AG04449 (cell line): ENCODE measurements at regions of chr1 and their contacts with region 1.

Region 1: DNA sequence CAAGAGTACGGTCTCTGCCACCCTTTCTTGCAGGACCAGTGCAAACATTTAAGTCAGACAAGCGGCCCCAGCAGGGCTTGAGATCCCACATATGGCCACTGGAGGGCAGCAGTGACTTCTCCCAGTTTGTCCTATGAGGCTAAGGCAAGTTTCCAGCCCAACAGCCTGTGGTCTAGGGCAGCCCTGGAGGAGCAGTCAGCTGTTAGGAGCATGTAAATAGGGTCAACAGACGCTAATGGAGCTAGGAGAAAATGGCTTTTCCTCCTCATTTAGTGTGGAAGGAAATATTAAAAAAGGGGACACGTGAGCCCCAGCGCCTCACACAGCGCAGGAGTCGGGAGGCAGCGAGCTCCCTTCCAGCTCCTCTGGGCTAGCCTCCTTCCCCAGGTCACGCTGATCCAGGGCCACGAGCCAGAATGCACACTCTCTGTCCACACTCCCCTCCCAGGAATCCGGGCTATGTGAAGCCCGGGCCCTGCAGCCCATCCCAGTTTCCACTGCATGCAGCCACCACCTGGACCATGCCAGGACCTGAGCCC is 95.6 kb downstream of the LAMC2 start:
- DNase-seq: no peak
- H3K4me3 ChIP-seq: no peak overlapping the region
- CTCF ChIP-seq: peak; percentile 93

Region 2: GRCh38 chr1:183058851-183059502 is 222.6 kb before region 1 on chr1:
- CTCF ChIA-PET with region 1: no interaction called
- POLR2A ChIA-PET with region 1: no interaction called
- DNase-seq: no peak
- H3K4me3 ChIP-seq: no peak overlapping the region
- CTCF ChIP-seq: no peak

Region 3: DNA sequence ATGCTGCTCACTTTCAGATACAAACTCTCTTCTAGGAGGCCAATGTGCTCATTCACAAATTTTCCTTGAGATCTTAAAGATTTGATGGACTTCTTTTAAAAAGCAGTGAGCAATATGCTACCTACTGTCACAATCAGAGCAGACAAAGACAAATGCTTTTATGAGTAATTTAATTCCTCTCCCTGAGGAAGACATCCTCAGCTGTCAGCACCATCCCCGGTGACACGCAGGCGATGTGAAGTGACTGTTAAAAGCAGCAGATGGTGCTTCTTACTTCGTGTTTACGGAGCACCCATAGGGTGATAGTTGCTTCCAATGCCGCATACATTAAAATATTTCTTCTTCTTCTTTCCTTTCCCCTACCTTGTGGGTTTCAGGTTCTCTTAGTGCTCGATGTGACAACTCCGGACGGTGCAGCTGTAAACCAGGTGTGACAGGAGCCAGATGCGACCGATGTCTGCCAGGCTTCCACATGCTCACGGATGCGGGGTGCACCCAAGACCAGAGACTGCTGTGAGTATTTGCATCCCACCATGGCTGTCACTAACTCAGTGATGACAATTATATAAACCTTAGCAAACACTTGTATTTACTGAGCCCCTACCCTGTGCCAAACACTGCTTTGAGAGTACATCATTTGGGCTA is 66.4 kb before region 1 on chr1:
- CTCF ChIA-PET with region 1: no interaction called
- POLR2A ChIA-PET with region 1: no interaction called
- DNase-seq: no peak
- H3K4me3 ChIP-seq: no peak overlapping the region
- CTCF ChIP-seq: no peak

Region 4: DNA sequence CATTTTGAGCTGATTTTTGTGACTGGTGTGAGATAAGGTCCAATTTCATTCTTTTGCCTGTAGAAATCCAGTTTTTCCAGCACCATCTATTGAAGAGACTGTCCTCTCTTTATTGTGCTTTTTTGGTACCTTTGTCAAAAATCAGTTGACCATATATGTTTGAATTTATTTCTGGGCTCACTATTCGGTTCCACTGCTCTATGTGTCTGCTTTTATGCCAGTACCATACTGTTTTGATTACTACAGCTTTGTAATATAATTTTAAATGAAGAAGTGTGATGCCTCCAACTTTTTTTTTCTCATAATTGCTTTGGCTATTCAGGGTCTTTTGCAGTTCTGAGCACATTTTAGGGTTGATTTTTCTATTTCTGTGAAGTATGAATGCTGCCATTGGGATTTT is 26.5 kb before region 1 on chr1:
- CTCF ChIA-PET with region 1: no interaction called
- POLR2A ChIA-PET with region 1: no interaction called
- DNase-seq: no peak
- H3K4me3 ChIP-seq: no peak overlapping the region
- CTCF ChIP-seq: no peak

Region 5: DNA sequence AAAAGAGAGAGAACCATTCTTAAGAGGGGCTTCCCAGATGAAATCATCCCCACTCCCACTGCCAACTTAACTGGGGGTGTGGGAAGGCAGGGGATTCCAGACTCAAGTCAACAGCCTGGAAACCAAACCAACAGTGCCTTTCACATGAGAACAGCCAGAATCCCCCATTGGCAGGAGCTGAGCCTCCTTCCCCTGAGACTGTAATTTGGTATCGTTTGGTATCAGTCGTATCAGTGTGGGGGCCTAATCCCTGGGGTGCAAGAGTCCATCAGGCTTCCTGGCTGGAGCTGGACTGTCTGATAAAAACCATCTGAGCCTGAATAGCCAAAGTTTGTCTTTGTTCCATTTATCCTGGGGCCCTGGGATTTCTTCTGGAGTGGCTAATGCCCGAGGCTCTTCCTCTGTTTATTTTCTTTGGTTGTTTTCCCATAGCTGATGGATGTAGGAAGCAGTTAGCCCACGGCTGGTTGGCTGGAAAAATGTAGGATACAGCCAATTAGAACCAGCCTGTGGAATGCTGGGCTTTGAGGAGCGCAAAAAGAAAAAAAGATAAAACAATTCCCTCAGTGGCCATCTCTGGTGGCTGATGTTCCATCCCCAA is 11.0 kb before region 1 on chr1:
- CTCF ChIA-PET with region 1: interaction called, 80 read pairs
- POLR2A ChIA-PET with region 1: interaction called, 16 read pairs
- DNase-seq: peak; percentile 82
- H3K4me3 ChIP-seq: no peak overlapping the region
- CTCF ChIP-seq: no peak

Region 6: GRCh38 chr1:183291802-183292514 is 10.3 kb after region 1 on chr1:
- CTCF ChIA-PET with region 1: interaction called, 61 read pairs
- POLR2A ChIA-PET with region 1: no interaction called
- DNase-seq: no peak
- H3K4me3 ChIP-seq: no peak overlapping the region
- CTCF ChIP-seq: no peak

Region 7: DNA sequence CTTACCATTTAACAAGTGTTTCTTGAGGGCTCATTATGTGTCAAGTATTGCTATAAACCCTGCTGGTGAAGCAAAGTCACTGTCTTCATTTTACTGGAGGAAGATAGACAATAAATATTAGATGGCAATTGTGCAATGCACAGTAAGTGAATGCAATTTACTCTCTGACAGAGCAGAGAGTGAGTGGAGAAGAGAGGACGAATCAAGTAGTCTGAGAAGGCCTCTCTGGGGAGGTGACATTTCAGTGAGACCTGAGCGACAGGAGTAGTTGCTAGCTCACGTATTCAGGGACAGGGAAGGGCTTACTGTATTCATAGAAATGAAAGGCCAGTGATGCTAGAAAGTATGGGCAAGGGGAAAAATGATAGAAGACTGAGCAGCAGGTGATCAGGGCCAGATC is 137.8 kb after region 1 on chr1:
- CTCF ChIA-PET with region 1: no interaction called
- POLR2A ChIA-PET with region 1: no interaction called
- DNase-seq: no peak
- H3K4me3 ChIP-seq: no peak overlapping the region
- CTCF ChIP-seq: no peak